PC-3 (cell line): ENCODE measurements at regions of chr17 and their contacts with region 1.

Region 1: GRCh38 chr17:39450847-39451581 is at the start of gene MED1:
- DNase-seq: peak; percentile 96
- ATAC-seq: peak; percentile 100
- H3K4me3 ChIP-seq: peak within 1 kb of the TSS; percentile 92
- H3K27ac ChIP-seq: peak within 1 kb of the TSS; percentile 54
- H3K4me1 ChIP-seq: peaks cover 4% of the 10 kb centered on the region; the same call in 1 of the 2 replicates
- H3K27me3 ChIP-seq: no peaks in the 10 kb centered on the region
- CTCF ChIP-seq: no peak
- total RNA-seq, gene MED1: 19.1 and 27.0 TPM in 2 replicates

Region 2: DNA sequence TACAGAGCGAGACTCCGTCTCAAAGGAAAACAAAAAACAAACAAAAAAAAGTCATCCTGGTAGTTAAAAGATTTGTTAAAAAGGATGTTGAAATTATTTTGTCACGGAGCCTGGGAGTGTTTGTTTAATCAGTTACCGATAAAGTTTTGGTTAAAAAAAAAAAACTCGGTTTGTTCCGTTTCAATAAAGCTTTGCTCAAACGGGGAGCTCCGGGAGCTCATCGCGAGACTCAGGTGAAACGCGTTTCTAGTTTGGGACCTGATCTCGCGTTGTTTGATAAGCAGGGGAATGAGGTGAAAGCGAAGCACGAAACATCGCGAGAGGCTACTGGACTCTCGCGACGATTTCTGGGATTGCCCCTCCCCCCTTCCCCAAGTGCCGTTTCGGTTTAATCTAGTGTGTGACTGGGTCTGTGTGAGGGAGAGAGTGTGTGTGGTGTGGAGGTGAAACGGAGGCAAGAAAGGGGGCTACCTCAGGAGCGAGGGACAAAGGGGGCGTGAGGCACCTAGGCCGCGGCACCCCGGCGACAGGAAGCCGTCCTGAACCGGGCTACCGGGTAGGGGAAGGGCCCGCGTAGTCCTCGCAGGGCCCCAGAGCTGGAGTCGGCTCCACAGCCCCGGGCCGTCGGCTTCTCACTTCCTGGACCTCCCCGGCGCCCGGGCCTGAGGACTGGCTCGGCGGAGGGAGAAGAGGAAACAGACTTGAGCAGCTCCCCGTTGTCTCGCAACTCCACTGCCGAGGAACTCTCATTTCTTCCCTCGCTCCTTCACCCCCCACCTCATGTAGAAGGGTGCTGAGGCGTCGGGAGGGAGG is 10.3 kb after region 1 on chr17 and contains the start of gene CDK12:
- CTCF ChIA-PET with region 1: no interaction called
- POLR2A ChIA-PET with region 1: interaction called, 68 read pairs
- intact Hi-C with region 1: no loop called
- DNase-seq: peak; percentile 99
- ATAC-seq: peak; percentile 81
- H3K4me3 ChIP-seq: peak within 1 kb of the TSS; percentile 76
- H3K27ac ChIP-seq: peak within 1 kb of the TSS; percentile 82
- H3K4me1 ChIP-seq: no peaks in the 10 kb centered on the region
- H3K27me3 ChIP-seq: no peaks in the 10 kb centered on the region
- CTCF ChIP-seq: no peak
- total RNA-seq, gene CDK12: 30.4 and 39.2 TPM in 2 replicates

Region 3: DNA sequence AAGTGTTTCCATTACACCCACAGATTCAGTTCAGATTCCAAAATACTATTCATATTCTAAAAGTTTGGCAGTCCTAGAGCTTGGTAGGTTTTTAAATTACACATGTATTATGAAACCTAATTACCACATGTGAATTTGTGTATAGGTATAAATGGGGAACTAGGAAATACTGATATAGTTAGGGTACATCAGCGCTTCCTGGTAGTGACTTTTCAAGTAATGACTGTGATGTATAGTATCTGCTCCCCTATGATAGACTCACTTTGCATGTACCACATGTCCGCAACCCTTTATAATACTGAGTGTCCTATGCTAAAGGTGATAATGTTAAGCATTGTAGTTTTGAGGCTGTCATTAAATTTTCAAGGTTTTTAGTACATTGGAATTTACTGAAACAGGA is 33.2 kb after region 1 on chr17:
- CTCF ChIA-PET with region 1: no interaction called
- POLR2A ChIA-PET with region 1: interaction called, 13 read pairs
- intact Hi-C with region 1: no loop called
- DNase-seq: no peak
- ATAC-seq: no peak
- H3K4me3 ChIP-seq: no peak overlapping the region
- H3K27ac ChIP-seq: no peak overlapping the region
- H3K4me1 ChIP-seq: peaks cover 12% of the 10 kb centered on the region; the same call in 1 of the 2 replicates
- H3K27me3 ChIP-seq: no peaks in the 10 kb centered on the region
- CTCF ChIP-seq: no peak

Region 4: GRCh38 chr17:39547713-39548478 is 96.9 kb after region 1 on chr17:
- CTCF ChIA-PET with region 1: no interaction called
- POLR2A ChIA-PET with region 1: interaction called, 14 read pairs
- intact Hi-C with region 1: no loop called
- DNase-seq: peak; percentile 55
- ATAC-seq: peak; percentile 88
- H3K4me3 ChIP-seq: no peak overlapping the region
- H3K27ac ChIP-seq: no peak overlapping the region
- H3K4me1 ChIP-seq: no peaks in the 10 kb centered on the region
- H3K27me3 ChIP-seq: no peaks in the 10 kb centered on the region
- CTCF ChIP-seq: peak; percentile 98

Region 5: GRCh38 chr17:39822051-39822451 is 371.0 kb after region 1 on chr17:
- CTCF ChIA-PET with region 1: no interaction called
- POLR2A ChIA-PET with region 1: no interaction called
- intact Hi-C with region 1: no loop called
- DNase-seq: no peak
- ATAC-seq: no peak
- H3K4me3 ChIP-seq: no peak overlapping the region
- H3K27ac ChIP-seq: no peak overlapping the region
- H3K4me1 ChIP-seq: no peaks in the 10 kb centered on the region
- H3K27me3 ChIP-seq: no peaks in the 10 kb centered on the region
- CTCF ChIP-seq: no peak